ENCODE measurements at regions of chr5 and their contacts with region 1.

Region 1: GRCh38 chr5:35651002-35651756 is 33.5 kb downstream of the SPEF2 start:
- DNase-seq: peak; percentile 76
- ATAC-seq: peak; percentile 97
- H3K4me3 Mint-ChIP-seq: no peak overlapping the region
- H3K27ac Mint-ChIP-seq: no peak overlapping the region
- H3K4me1 Mint-ChIP-seq: peaks cover 6% of the 10 kb centered on the region
- H3K27me3 Mint-ChIP-seq: no peaks in the 10 kb centered on the region

Region 2: DNA sequence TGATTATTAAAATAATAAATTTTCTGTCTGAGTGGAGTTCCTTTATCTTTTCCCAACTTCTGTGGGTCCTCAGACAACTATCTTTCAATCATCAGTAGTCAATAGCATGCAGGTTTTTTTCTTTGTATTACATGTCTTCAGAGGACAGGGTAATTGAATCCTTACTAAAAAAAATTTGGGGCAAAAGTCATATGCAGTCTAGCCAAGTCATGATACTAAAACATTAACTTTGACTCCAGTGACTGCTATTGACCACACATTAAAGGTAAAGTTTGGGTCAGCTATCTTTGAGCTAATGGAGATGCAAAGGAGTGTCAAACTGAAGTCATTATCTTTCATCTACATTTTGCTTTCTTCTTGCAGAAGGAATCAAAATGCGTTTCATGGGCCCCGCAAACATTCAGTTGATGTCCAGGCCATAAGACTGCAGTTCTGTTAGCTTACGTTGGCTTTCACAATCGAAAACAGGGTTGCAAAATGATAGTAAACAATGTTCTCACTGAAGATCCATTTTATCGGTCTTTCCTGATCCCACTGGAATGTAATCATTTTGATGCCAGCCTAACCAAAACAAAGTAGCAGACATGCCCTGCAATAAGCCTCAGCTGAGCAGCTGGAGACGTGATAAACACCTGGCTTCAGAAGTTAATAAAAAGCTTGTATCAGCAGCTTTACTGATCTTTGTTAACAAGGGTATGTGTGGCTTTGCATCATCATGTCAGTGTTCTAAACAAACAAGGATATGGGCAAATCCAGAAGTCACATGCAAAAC is 234.8 kb before region 1 on chr5:
- CTCF ChIA-PET with region 1: no interaction called
- POLR2A ChIA-PET with region 1: no interaction called
- DNase-seq: no peak
- ATAC-seq: no peak
- H3K4me3 Mint-ChIP-seq: no peak overlapping the region
- H3K27ac Mint-ChIP-seq: no peak overlapping the region
- H3K4me1 Mint-ChIP-seq: no peaks in the 10 kb centered on the region
- H3K27me3 Mint-ChIP-seq: no peaks in the 10 kb centered on the region

Region 3: GRCh38 chr5:35617435-35618303 is 33.5 kb before region 1 on chr5 and contains the start of gene SPEF2:
- CTCF ChIA-PET with region 1: interaction called, 12 read pairs
- POLR2A ChIA-PET with region 1: interaction called, 5 read pairs
- DNase-seq: peak; percentile 87
- ATAC-seq: peak; percentile 96
- H3K4me3 Mint-ChIP-seq: peak within 1 kb of the TSS; percentile 91
- H3K27ac Mint-ChIP-seq: peak within 1 kb of the TSS; percentile 96
- H3K4me1 Mint-ChIP-seq: peaks cover 33% of the 10 kb centered on the region
- H3K27me3 Mint-ChIP-seq: no peaks in the 10 kb centered on the region
- total RNA-seq, gene SPEF2: 5.1 to 6.4 TPM

Region 4: DNA sequence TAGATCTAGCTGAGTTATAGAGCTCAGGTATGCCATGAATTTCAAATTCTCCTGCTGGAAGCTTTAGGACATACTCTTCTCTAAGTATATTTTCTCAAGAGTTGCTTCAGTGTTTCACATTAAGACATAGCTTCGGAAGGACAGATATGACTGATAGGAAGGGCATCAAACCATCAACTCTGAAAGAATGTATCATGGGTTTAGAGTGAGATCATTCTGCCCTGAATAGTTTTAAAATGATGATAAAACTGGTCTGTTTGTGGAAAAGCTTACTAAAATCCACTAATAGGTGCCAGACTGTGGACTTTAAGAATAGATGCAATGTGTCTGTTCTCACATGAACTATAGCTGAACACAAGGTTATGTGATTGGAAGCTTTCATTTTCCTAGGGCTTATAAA is 25.1 kb before region 1 on chr5:
- CTCF ChIA-PET with region 1: interaction called, 16 read pairs
- POLR2A ChIA-PET with region 1: interaction called, 3 read pairs
- DNase-seq: no peak
- ATAC-seq: no peak
- H3K4me3 Mint-ChIP-seq: no peak overlapping the region
- H3K27ac Mint-ChIP-seq: no peak overlapping the region
- H3K4me1 Mint-ChIP-seq: peaks cover 6% of the 10 kb centered on the region
- H3K27me3 Mint-ChIP-seq: no peaks in the 10 kb centered on the region

Region 5: GRCh38 chr5:35665096-35665495 is 13.9 kb after region 1 on chr5:
- CTCF ChIA-PET with region 1: interaction called, 44 read pairs
- POLR2A ChIA-PET with region 1: interaction called, 3 read pairs
- DNase-seq: no peak
- ATAC-seq: peak; percentile 42
- H3K4me3 Mint-ChIP-seq: no peak overlapping the region
- H3K27ac Mint-ChIP-seq: peak overlapping the region; percentile 10
- H3K4me1 Mint-ChIP-seq: peaks cover 32% of the 10 kb centered on the region
- H3K27me3 Mint-ChIP-seq: no peaks in the 10 kb centered on the region

Region 6: GRCh38 chr5:35672995-35673394 is 21.8 kb after region 1 on chr5:
- CTCF ChIA-PET with region 1: interaction called, 13 read pairs
- POLR2A ChIA-PET with region 1: no interaction called
- DNase-seq: peak; percentile 67
- ATAC-seq: peak; percentile 93
- H3K4me3 Mint-ChIP-seq: peak overlapping the region; percentile 15
- H3K27ac Mint-ChIP-seq: peak overlapping the region; percentile 84
- H3K4me1 Mint-ChIP-seq: peaks cover 58% of the 10 kb centered on the region
- H3K27me3 Mint-ChIP-seq: no peaks in the 10 kb centered on the region

Region 7: GRCh38 chr5:35822511-35822910 is 171.3 kb after region 1 on chr5:
- CTCF ChIA-PET with region 1: interaction called, 23 read pairs
- POLR2A ChIA-PET with region 1: interaction called, 5 read pairs
- DNase-seq: peak; percentile 78
- ATAC-seq: peak; percentile 68
- H3K4me3 Mint-ChIP-seq: peak overlapping the region; percentile 30
- H3K27ac Mint-ChIP-seq: peak overlapping the region; percentile 75
- H3K4me1 Mint-ChIP-seq: peaks cover 85% of the 10 kb centered on the region
- H3K27me3 Mint-ChIP-seq: no peaks in the 10 kb centered on the region